ENCODE measurements at regions of chr15 and their contacts with region 1.

Region 1: DNA sequence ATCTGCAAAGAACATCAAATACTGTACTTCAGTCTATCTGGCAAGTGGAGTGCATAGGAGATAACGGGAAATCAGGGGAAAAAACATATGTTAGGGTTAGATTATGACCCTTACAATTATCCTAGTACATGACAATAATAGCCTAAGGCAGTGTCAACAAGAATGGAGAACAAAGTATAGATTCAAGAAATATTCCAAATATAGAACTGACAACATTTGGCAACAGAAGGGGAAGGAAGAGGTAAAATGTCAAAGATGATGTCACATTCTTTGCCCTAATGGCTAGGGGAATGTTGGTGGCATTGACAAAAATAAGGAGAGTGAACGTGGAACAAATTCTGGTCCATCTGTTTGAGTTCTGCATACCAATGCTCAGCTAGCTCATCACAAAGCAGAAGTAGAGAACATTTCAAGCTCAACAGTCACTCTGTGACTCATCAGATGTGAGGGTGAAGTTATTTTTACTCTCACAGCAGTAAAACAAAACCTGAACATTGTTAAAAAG is 15.5 kb upstream of the ATP8B4 start:
- DNase-seq: no peak
- H3K4me3 Mint-ChIP-seq: no peak overlapping the region
- H3K27ac Mint-ChIP-seq: peak overlapping the region; percentile 84
- H3K4me1 Mint-ChIP-seq: peaks cover 52% of the 10 kb centered on the region
- H3K27me3 Mint-ChIP-seq: peaks cover 14% of the 10 kb centered on the region

Region 2: DNA sequence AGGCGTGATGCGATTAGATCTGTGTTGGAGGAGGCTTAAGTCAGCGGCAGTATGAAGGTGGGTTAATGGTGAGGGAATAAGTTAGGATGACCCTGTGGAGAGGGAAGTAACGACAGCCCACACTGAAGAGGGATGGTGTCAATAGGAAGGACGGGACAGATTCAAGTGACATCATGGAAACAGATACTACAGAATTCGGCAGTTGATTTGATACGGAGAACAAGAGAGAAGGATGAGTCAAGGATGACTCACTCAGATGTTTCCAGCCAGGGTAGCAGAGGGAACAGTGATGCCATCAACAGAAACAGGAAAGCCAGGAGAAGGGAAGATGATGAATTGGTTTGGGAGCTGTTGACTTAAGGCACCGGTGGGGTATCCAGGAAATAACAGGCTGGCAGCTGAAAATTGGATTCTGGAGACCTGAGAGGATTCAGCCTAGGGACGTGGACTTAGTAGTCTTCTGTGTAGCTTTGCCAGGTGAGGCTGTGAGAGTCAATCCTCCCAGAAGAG is 1208.8 kb before region 1 on chr15:
- CTCF ChIA-PET with region 1: no interaction called
- POLR2A ChIA-PET with region 1: no interaction called
- intact Hi-C with region 1: loop called (anchors 5 kb)
- DNase-seq: peak; percentile 28
- H3K4me3 Mint-ChIP-seq: no peak overlapping the region
- H3K27ac Mint-ChIP-seq: peak overlapping the region; percentile 54
- H3K4me1 Mint-ChIP-seq: peaks cover 42% of the 10 kb centered on the region
- H3K27me3 Mint-ChIP-seq: peaks cover 12% of the 10 kb centered on the region

Region 3: GRCh38 chr15:49620658-49621368 is 513.8 kb before region 1 on chr15 and contains the starts of genes DTWD1 and FAM227B:
- CTCF ChIA-PET with region 1: no interaction called
- POLR2A ChIA-PET with region 1: no interaction called
- intact Hi-C with region 1: loop called (anchors 1 kb)
- DNase-seq: peak; percentile 96
- H3K4me3 Mint-ChIP-seq: peak within 1 kb of the TSS; percentile 94
- H3K27ac Mint-ChIP-seq: peak within 1 kb of the TSS; percentile 92
- H3K4me1 Mint-ChIP-seq: peaks cover 32% of the 10 kb centered on the region
- H3K27me3 Mint-ChIP-seq: no peaks in the 10 kb centered on the region
- total RNA-seq, gene DTWD1: 14.3 to 18.5 TPM
- total RNA-seq, gene FAM227B: 2.8 to 3.8 TPM

Region 4: DNA sequence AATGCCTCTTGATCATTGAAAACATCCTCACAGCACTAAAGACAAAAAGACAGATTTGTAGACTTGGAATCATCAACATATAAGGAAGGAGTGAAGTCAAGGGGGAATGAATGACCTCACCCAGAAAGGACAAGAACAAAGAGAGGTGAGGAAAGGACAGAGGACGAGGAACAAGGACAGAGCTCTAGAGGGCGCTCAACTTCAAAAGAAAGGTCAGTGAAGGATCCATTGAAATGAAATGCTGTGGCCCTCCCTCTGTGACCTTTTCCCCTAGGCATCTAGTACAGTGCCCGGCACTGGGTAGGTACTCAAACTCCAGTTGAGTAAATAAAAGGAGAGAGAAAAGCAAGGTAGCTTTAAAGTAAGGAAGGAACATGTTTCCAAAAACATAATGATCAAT is 18.1 kb before region 1 on chr15:
- CTCF ChIA-PET with region 1: interaction called, 6 read pairs
- POLR2A ChIA-PET with region 1: no interaction called
- intact Hi-C with region 1: loop called (anchors 1 kb)
- DNase-seq: peak; percentile 40
- H3K4me3 Mint-ChIP-seq: no peak overlapping the region
- H3K27ac Mint-ChIP-seq: no peak overlapping the region
- H3K4me1 Mint-ChIP-seq: peaks cover 11% of the 10 kb centered on the region
- H3K27me3 Mint-ChIP-seq: peaks cover 17% of the 10 kb centered on the region

Region 5: GRCh38 chr15:50182219-50183013 is 47.8 kb after region 1 on chr15:
- CTCF ChIA-PET with region 1: interaction called, 4 read pairs
- POLR2A ChIA-PET with region 1: interaction called, 9 read pairs
- intact Hi-C with region 1: loop called (anchors 1 kb)
- DNase-seq: peak; percentile 68
- H3K4me3 Mint-ChIP-seq: peak overlapping the region; percentile 98
- H3K27ac Mint-ChIP-seq: peak overlapping the region; percentile 78
- H3K4me1 Mint-ChIP-seq: peaks cover 34% of the 10 kb centered on the region
- H3K27me3 Mint-ChIP-seq: peaks cover 17% of the 10 kb centered on the region

Region 6: GRCh38 chr15:50765195-50765973 is 630.8 kb after region 1 on chr15 and contains the start of gene SPPL2A:
- CTCF ChIA-PET with region 1: no interaction called
- POLR2A ChIA-PET with region 1: no interaction called
- intact Hi-C with region 1: loop called (anchors 10 kb)
- DNase-seq: peak; percentile 94
- H3K4me3 Mint-ChIP-seq: peak within 1 kb of the TSS; percentile 92
- H3K27ac Mint-ChIP-seq: peak within 1 kb of the TSS; percentile 93
- H3K4me1 Mint-ChIP-seq: peaks cover 56% of the 10 kb centered on the region
- H3K27me3 Mint-ChIP-seq: no peaks in the 10 kb centered on the region
- total RNA-seq, gene SPPL2A: 79.9 to 82.1 TPM

Measured in activated CD4-positive, alpha-beta memory T cell treated with anti-CD3 and anti-CD28 coated beads for 36 hours (primary cell).